ENCODE measurements at regions of chr21 and their contacts with region 1.

Region 1: DNA sequence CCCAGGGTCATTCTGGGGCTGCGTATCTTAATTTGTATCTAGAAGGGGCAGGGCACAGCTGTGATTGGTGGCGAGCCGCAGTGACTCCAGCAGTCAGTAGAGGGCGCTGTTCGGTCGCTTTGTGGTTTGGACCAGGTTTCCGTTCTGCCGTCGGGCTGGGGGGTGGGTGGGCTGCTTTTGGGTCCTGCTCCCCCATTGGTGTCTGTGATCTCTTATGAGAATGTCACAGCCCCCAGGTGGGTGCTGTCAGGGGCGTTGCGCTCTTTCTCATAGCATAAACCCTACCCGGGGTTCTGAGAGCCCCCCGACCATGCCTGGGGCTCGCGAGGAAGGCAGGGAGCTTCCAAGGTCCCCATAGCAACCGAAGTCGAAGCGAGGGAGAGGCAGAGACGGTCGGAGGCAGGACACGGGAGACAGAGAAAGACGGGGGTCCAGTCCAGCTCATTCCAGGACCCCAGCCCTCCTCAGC is 5.4 kb downstream of the TFF3 start:
- DNase-seq: peak; percentile 93
- H3K4me3 Mint-ChIP-seq: no peak overlapping the region
- H3K27ac Mint-ChIP-seq: no peak overlapping the region
- H3K4me1 Mint-ChIP-seq: peaks cover 4% of the 10 kb centered on the region
- H3K27me3 Mint-ChIP-seq: peaks cover 10% of the 10 kb centered on the region

Region 2: GRCh38 chr21:42537106-42537742 is 227.4 kb after region 1 on chr21:
- intact Hi-C with region 1: loop called (anchors 5 kb)
- DNase-seq: peak; percentile 71
- H3K4me3 Mint-ChIP-seq: no peak overlapping the region
- H3K27ac Mint-ChIP-seq: no peak overlapping the region
- H3K4me1 Mint-ChIP-seq: peaks cover 8% of the 10 kb centered on the region
- H3K27me3 Mint-ChIP-seq: no peaks in the 10 kb centered on the region

Measured in activated CD4-positive, alpha-beta T cell treated with anti-CD3 and anti-CD28 coated beads, Interleukin-2, amount 10 ng/mL, durations not matched to agents 24 days and 14 days (primary cell).